ENCODE measurements at regions of chr17 and their contacts with region 1.

Region 1: GRCh38 chr17:49707608-49708514 is at the start of gene SLC35B1:
- DNase-seq: peak; percentile 100
- ATAC-seq: peak; percentile 99 to 100 (median 99)
- H3K4me3 ChIP-seq: peak within 1 kb of the TSS; percentile 81
- H3K27ac ChIP-seq: peak within 1 kb of the TSS; percentile 98
- H3K4me1 ChIP-seq: peaks cover 9% of the 10 kb centered on the region
- H3K27me3 ChIP-seq: no peaks in the 10 kb centered on the region
- CTCF ChIP-seq: peak; percentile 57
- total RNA-seq, gene SLC35B1: 39.5 to 69.5 (median 60.9) TPM

Region 2: GRCh38 chr17:49086649-49087048 is 621.2 kb before region 1 on chr17:
- intact Hi-C with region 1: no loop called
- DNase-seq: no peak
- ATAC-seq: no peak
- H3K4me3 ChIP-seq: no peak overlapping the region
- H3K27ac ChIP-seq: no peak overlapping the region
- H3K4me1 ChIP-seq: no peaks in the 10 kb centered on the region
- H3K27me3 ChIP-seq: peaks cover 2 to 44% (median 7%) of the 10 kb centered on the region in 3 donors
- CTCF ChIP-seq: no peak

Region 3: GRCh38 chr17:49434821-49435670 is 272.8 kb before region 1 on chr17:
- intact Hi-C with region 1: loop called in 1 of 2 experiments (anchors 10 kb)
- DNase-seq: no peak
- ATAC-seq: peak; percentile 54 to 84 (median 80)
- H3K4me3 ChIP-seq: no peak overlapping the region
- H3K27ac ChIP-seq: no peak overlapping the region
- H3K4me1 ChIP-seq: no peaks in the 10 kb centered on the region
- H3K27me3 ChIP-seq: peaks cover 0 to 13% (median 5%) of the 10 kb centered on the region in 3 donors
- CTCF ChIP-seq: peak; percentile 72

Region 4: GRCh38 chr17:49496183-49496866 is 211.5 kb before region 1 on chr17:
- intact Hi-C with region 1: loop called in 1 of 2 experiments (anchors 5 kb)
- DNase-seq: peak; percentile 82 to 90
- ATAC-seq: peak; percentile 85 to 92 (median 86)
- H3K4me3 ChIP-seq: peak overlapping the region; percentile 71
- H3K27ac ChIP-seq: no peak overlapping the region
- H3K4me1 ChIP-seq: peaks cover 26% of the 10 kb centered on the region
- H3K27me3 ChIP-seq: peaks cover 0 to 67% (median 7%) of the 10 kb centered on the region in 3 donors
- CTCF ChIP-seq: peak; percentile 86

Region 5: GRCh38 chr17:49779739-49780231 is 71.9 kb after region 1 on chr17:
- intact Hi-C with region 1: loop called (anchors 5 kb)
- DNase-seq: no peak
- ATAC-seq: peak; percentile 59 to 79 (median 72)
- H3K4me3 ChIP-seq: no peak overlapping the region
- H3K27ac ChIP-seq: no peak overlapping the region
- H3K4me1 ChIP-seq: peaks cover 15% of the 10 kb centered on the region
- H3K27me3 ChIP-seq: no peaks in the 10 kb centered on the region
- CTCF ChIP-seq: peak; percentile 48

Region 6: DNA sequence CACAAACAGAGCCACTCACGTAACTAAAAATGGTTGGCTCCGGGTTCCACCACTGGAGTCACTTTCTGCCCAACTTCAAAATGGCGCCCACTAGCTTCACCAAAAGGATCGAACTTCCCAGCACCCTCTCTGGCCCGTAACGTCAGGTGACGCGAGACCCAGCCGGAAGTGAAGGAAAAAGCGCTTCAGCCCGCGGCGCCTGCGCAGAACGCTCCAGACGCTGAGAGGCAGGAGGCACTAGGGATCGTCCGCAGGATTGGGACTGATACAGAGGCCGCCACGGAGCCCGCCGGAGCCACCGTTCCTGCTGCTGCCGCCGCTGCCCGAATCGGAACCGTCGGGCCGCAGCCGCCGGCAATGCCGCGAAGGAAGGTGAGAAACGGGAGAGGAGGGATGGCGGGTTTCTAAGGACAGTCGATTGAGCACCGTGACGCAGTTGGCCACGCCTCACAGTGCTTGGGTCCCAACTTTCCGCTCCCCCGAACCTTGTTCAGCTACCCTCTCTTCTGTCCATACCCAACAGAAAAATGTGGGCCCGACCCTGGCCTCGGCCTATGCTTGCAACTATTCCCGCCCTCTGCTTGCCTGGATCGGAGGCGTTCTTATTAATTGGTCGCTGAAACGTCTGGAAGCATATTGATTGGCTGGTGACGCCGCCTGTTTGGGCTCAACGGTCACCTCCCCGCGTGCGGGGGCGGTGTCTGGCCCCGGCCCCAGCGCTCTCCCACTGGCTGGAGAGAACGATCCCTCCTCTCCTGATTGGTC is 80.8 kb after region 1 on chr17 and contains the start of gene KAT7:
- intact Hi-C with region 1: loop called in 1 of 2 experiments (anchors 5 kb)
- DNase-seq: peak; percentile 99 to 100
- ATAC-seq: peak; percentile 94 to 96 (median 95)
- H3K4me3 ChIP-seq: peak within 1 kb of the TSS; percentile 100
- H3K27ac ChIP-seq: peak within 1 kb of the TSS; percentile 100
- H3K4me1 ChIP-seq: peaks cover 47% of the 10 kb centered on the region
- H3K27me3 ChIP-seq: no peaks in the 10 kb centered on the region
- CTCF ChIP-seq: no peak
- total RNA-seq, gene KAT7: 27.6 to 60.7 (median 54.7) TPM

Region 7: DNA sequence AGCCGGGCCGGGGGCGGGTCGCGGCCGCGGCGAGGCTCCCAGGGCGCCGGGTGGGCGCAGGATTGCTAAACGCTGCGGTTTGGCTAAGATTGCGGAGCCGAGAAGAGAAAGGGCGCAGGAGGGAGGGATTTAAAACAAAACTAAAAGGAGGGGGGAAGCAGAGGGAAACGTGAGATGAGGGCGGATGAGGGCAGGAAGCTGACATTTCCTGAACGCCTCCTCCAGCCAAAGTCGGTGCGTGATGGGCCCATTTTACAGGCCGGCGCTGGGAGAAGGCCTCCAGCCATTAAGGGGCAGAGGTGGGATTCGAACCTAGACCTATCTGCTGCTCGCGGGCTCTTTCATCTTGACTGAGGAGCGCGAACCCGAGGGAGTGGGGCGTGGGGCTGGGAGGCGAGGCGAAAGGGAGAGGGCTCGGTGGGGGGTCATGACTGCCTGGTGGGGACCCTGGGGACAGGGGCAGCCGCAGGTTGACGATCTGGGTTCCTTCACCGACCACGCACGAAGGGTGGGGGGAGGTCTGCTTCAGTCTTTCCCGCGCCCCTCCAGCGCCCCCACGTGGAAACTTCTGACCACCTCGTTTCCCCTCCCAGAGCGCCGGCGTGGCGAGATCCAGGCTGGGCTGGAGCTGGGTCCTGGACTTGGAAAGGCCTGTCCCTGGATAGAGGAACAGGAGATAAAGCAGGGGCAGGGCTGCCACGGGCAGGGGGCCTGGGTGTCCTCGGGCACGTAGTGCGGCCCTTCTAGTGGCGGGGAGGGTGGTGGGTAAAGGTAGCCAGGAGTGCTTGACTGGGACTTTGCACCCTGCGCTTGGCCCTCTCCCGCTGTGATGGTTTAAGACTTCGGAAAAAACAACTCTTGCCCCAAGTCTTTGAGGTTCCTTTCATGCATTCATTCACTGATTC is 143.8 kb after region 1 on chr17:
- intact Hi-C with region 1: loop called (anchors 5 kb)
- DNase-seq: peak; percentile 76 to 87
- ATAC-seq: peak; percentile 72 to 89 (median 79)
- H3K4me3 ChIP-seq: peak overlapping the region; percentile 69
- H3K27ac ChIP-seq: peak overlapping the region; percentile 51
- H3K4me1 ChIP-seq: peaks cover 11% of the 10 kb centered on the region
- H3K27me3 ChIP-seq: no peaks in the 10 kb centered on the region
- CTCF ChIP-seq: peak; percentile 74

Measured in psoas muscle (tissue), 8 donors.